ENCODE measurements at regions of chr20 and their contacts with region 1.

Region 1: GRCh38 chr20:17960927-17961586 is 7.5 kb downstream of the SNX5 start:
- DNase-seq: no peak
- H3K4me3 ChIP-seq: no peak overlapping the region
- CTCF ChIP-seq: no peak
- POLR2A ChIP-seq: no peak

Region 2: DNA sequence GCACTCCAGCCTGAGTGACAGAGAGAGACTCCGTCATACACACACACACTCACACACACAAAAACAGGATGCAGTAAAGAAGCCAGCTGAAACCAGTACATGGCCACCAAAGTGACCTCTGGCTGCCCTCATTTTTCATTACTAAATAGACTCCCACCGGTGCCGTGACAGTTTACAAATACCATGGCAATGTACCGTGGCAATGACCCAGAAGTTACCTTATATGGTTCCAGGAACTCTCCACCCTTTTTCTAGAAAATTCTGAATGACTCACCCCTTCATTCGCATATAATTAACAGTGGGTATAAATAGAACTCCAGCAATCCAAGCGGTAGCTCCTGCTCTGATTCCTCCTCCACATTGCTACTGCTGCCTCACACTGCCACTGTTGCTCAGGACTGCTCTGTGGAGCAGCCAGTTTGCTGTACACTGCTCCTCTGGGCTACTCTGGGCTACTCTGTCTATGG is 50.2 kb before region 1 on chr20:
- intact Hi-C with region 1: no loop called
- DNase-seq: peak in 1 of 2 donors; percentile 60
- H3K4me3 ChIP-seq: no peak overlapping the region
- CTCF ChIP-seq: no peak
- POLR2A ChIP-seq: no peak

Region 3: DNA sequence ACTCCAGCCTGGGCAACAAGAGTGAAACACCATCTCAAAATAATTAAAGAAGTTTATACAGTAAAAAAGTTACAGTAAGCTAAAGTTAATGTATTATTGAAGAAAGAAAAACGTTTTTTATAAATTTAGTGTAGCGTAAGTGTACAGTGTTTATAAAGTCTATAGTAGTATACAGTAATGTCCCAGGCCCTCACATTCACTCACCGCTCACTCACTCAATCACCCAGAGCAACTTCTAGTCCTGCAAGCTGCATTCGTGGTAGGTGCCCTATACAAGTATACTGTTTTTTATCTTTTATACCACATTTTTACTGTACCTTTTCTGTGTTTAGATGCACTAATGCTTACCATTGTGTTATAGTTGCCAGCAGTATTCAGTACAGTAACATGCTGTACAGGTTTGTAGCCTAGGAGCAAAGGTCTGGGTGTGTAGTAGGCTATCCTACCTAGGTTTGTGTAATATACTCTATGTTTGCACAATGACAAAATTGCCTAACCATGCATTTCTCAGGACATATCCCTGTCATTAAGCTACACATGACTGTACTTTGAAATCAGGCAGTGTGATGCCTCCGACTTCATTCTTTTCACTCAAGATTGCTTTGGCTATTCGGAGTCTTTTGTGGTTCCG is 24.4 kb after region 1 on chr20:
- intact Hi-C with region 1: loop called (anchors 1 kb)
- DNase-seq: no peak
- H3K4me3 ChIP-seq: no peak overlapping the region
- CTCF ChIP-seq: no peak
- POLR2A ChIP-seq: no peak

Region 4: GRCh38 chr20:18587665-18588573 is 626.9 kb after region 1 on chr20 and contains the start of gene DTD1:
- intact Hi-C with region 1: no loop called
- DNase-seq: peak; percentile 88 to 98
- H3K4me3 ChIP-seq: peak within 1 kb of the TSS; percentile 87
- CTCF ChIP-seq: no peak
- POLR2A ChIP-seq: no peak
- total RNA-seq, gene DTD1: 21.7 to 41.8 (median 39.8) TPM